ENCODE measurements at regions of chr18 and their contacts with region 1.

Region 1: DNA sequence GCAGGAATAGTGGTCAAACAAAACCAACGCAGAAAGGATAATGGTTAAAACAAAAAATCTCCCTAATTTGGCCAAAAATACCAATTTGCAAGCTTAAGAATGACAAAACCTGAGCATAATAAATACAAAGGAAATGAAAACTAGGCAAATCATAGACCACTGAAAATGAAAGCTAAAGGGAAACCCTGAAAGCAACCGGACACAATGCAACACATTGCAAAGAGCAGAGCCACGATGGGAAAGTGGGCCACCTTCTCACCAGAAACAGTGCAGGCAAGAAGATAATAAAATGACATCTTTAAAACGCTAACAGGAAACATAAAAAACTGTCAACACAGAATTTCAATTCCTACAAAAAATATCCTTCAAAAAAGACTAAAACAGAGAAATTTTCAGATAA is 239.7 kb downstream of the L3MBTL4 start:
- DNase-seq: no peak
- H3K4me3 ChIP-seq: no peak overlapping the region
- H3K27ac ChIP-seq: no peak overlapping the region
- H3K4me1 ChIP-seq: no peaks in the 10 kb centered on the region
- H3K27me3 ChIP-seq: no peaks in the 10 kb centered on the region
- CTCF ChIP-seq: no peak
- POLR2A ChIP-seq: no peak

Region 2: DNA sequence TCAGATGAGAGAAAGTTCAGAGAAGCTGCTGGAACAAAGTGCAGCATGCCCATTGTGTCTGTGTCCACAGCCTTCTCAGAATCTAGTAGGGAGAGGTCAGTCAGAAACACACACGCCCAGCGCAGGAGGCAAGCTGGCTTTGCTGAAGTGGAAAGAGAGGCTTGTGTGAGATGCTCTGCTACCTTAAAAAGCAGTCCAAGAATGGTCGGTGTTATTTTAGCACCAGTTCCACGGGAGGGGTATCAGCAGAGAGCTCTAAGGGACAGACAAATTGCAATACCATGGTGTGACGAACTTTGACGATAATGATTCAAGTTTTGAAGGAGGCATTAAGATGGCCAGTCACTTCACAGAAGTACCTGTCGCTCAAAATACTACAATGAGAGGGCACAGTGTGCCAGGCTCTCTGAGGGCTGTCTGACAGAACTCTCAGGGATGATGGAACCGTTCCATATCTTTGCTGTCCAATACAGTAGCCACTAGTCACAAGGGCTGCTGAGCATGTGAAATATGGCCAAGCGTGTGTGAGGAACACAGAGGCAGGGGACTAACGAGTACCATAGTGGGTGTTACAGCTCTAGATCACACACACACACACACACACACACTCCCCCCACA is 42.1 kb before region 1 on chr18:
- intact Hi-C with region 1: no loop called
- DNase-seq: no peak
- H3K4me3 ChIP-seq: no peak overlapping the region
- H3K27ac ChIP-seq: no peak overlapping the region
- H3K4me1 ChIP-seq: no peaks in the 10 kb centered on the region
- H3K27me3 ChIP-seq: no peaks in the 10 kb centered on the region
- CTCF ChIP-seq: no peak
- POLR2A ChIP-seq: no peak

Region 3: GRCh38 chr18:6757931-6758330 is 582.9 kb after region 1 on chr18:
- intact Hi-C with region 1: loop called (anchors 5 kb)
- DNase-seq: no peak
- H3K4me3 ChIP-seq: no peak overlapping the region
- H3K27ac ChIP-seq: no peak overlapping the region
- H3K4me1 ChIP-seq: no peaks in the 10 kb centered on the region
- H3K27me3 ChIP-seq: no peaks in the 10 kb centered on the region
- CTCF ChIP-seq: no peak
- POLR2A ChIP-seq: no peak

Measured in breast epithelium (tissue), 4 donors.